CD4-positive, alpha-beta memory T cell (primary cell): ENCODE measurements at regions of chr16 and their contacts with region 1.

Region 1: GRCh38 chr16:3400779-3401688 is at the starts of genes ZNF174 and ZSCAN32:
- DNase-seq: peak; percentile 98 to 99 (median 99)
- H3K4me3 ChIP-seq: peak within 1 kb of the TSS; percentile 72 to 79
- H3K4me3 Mint-ChIP-seq: peak within 1 kb of the TSS; percentile 90 to 98 (median 94)
- H3K27ac ChIP-seq: peak within 1 kb of the TSS; percentile 69
- H3K27ac Mint-ChIP-seq: peak within 1 kb of the TSS; percentile 85 to 95 (median 90)
- H3K4me1 ChIP-seq: peaks cover 34% of the 10 kb centered on the region
- H3K4me1 Mint-ChIP-seq: peaks cover 36 to 68% (median 52%) of the 10 kb centered on the region in 4 donors
- H3K27me3 ChIP-seq: no peaks in the 10 kb centered on the region
- H3K27me3 Mint-ChIP-seq: no peaks in the 10 kb centered on the region
- total RNA-seq, gene ZNF174: 17.9 to 18.0 TPM
- total RNA-seq, gene ZSCAN32: 26.8 to 28.8 TPM

Region 2: GRCh38 chr16:3158471-3159314 is 242.3 kb before region 1 on chr16:
- CTCF ChIA-PET with region 1: no interaction called
- POLR2A ChIA-PET with region 1: interaction called, 11 read pairs
- intact Hi-C with region 1: no loop called
- DNase-seq: peak; percentile 92 to 98 (median 94)
- H3K4me3 ChIP-seq: peak overlapping the region; percentile 65 to 66
- H3K4me3 Mint-ChIP-seq: peak overlapping the region; percentile 83 to 96 (median 92)
- H3K27ac ChIP-seq: peak overlapping the region; percentile 62
- H3K27ac Mint-ChIP-seq: peak overlapping the region; percentile 92 to 100 (median 96)
- H3K4me1 ChIP-seq: peaks cover 25% of the 10 kb centered on the region
- H3K4me1 Mint-ChIP-seq: peaks cover 11 to 36% (median 25%) of the 10 kb centered on the region in 4 donors
- H3K27me3 ChIP-seq: no peaks in the 10 kb centered on the region
- H3K27me3 Mint-ChIP-seq: peaks cover 0 to 2% of the 10 kb centered on the region in 2 donors

Region 3: GRCh38 chr16:3305109-3306068 is 95.6 kb before region 1 on chr16 and contains the starts of genes TIGD7 and ZNF75A:
- CTCF ChIA-PET with region 1: interaction called, 9 read pairs
- POLR2A ChIA-PET with region 1: interaction called, 30 read pairs
- intact Hi-C with region 1: loop called (anchors 2 kb)
- DNase-seq: peak; percentile 82 to 93 (median 85)
- H3K4me3 ChIP-seq: peak within 1 kb of the TSS; percentile 80 to 88
- H3K4me3 Mint-ChIP-seq: peak within 1 kb of the TSS; percentile 79 to 87 (median 85)
- H3K27ac ChIP-seq: peak within 1 kb of the TSS; percentile 70
- H3K27ac Mint-ChIP-seq: peak within 1 kb of the TSS; percentile 64 to 84 (median 82)
- H3K4me1 ChIP-seq: peaks cover 16% of the 10 kb centered on the region
- H3K4me1 Mint-ChIP-seq: peaks cover 7 to 13% (median 11%) of the 10 kb centered on the region in 4 donors
- H3K27me3 ChIP-seq: no peaks in the 10 kb centered on the region
- H3K27me3 Mint-ChIP-seq: no peaks in the 10 kb centered on the region
- total RNA-seq, gene TIGD7: 14.2 to 19.0 TPM
- total RNA-seq, gene ZNF75A: 82.7 to 88.1 TPM

Region 4: GRCh38 chr16:3383045-3383448 is 18.0 kb before region 1 on chr16:
- CTCF ChIA-PET with region 1: no interaction called
- POLR2A ChIA-PET with region 1: interaction called, 13 read pairs
- intact Hi-C with region 1: no loop called
- DNase-seq: no peak
- H3K4me3 ChIP-seq: peak overlapping the region; percentile 22 to 25
- H3K4me3 Mint-ChIP-seq: no peak overlapping the region
- H3K27ac ChIP-seq: no peak overlapping the region
- H3K27ac Mint-ChIP-seq: no peak overlapping the region
- H3K4me1 ChIP-seq: no peaks in the 10 kb centered on the region
- H3K4me1 Mint-ChIP-seq: no peaks in the 10 kb centered on the region
- H3K27me3 ChIP-seq: no peaks in the 10 kb centered on the region
- H3K27me3 Mint-ChIP-seq: no peaks in the 10 kb centered on the region

Region 5: GRCh38 chr16:3457434-3458252 is 56.6 kb after region 1 on chr16:
- CTCF ChIA-PET with region 1: interaction called, 3 read pairs
- POLR2A ChIA-PET with region 1: interaction called, 30 read pairs
- intact Hi-C with region 1: loop called (anchors 1 kb)
- DNase-seq: peak; percentile 90 to 95 (median 92)
- H3K4me3 ChIP-seq: peak overlapping the region; percentile 73 to 94
- H3K4me3 Mint-ChIP-seq: peak overlapping the region; percentile 79 to 89 (median 84)
- H3K27ac ChIP-seq: peak overlapping the region; percentile 88
- H3K27ac Mint-ChIP-seq: peak overlapping the region; percentile 83 to 93 (median 92)
- H3K4me1 ChIP-seq: peaks cover 48% of the 10 kb centered on the region
- H3K4me1 Mint-ChIP-seq: peaks cover 29 to 57% (median 46%) of the 10 kb centered on the region in 4 donors
- H3K27me3 ChIP-seq: no peaks in the 10 kb centered on the region
- H3K27me3 Mint-ChIP-seq: no peaks in the 10 kb centered on the region

Region 6: GRCh38 chr16:3611146-3611975 is 210.3 kb after region 1 on chr16 and contains the start of gene SLX4:
- CTCF ChIA-PET with region 1: no interaction called
- POLR2A ChIA-PET with region 1: interaction called, 3 read pairs
- intact Hi-C with region 1: loop called (anchors 2 kb)
- DNase-seq: peak; percentile 88 to 97 (median 94)
- H3K4me3 ChIP-seq: peak within 1 kb of the TSS; percentile 89 to 98
- H3K4me3 Mint-ChIP-seq: peak within 1 kb of the TSS; percentile 97 to 100 (median 100)
- H3K27ac ChIP-seq: peak within 1 kb of the TSS; percentile 92
- H3K27ac Mint-ChIP-seq: peak within 1 kb of the TSS; percentile 88 to 100 (median 98)
- H3K4me1 ChIP-seq: peaks cover 34% of the 10 kb centered on the region
- H3K4me1 Mint-ChIP-seq: peaks cover 34 to 56% (median 47%) of the 10 kb centered on the region in 4 donors
- H3K27me3 ChIP-seq: no peaks in the 10 kb centered on the region
- H3K27me3 Mint-ChIP-seq: no peaks in the 10 kb centered on the region
- total RNA-seq, gene SLX4: 5.7 to 6.7 TPM